Colonic mucosa (tissue), 4 donors: ENCODE measurements at regions of chr1 and their contacts with region 1.

Region 1: GRCh38 chr1:150813058-150813707 is 5.1 kb upstream of the CTSK start:
- DNase-seq: peak; percentile 84
- H3K4me3 ChIP-seq: no peak overlapping the region
- H3K27ac ChIP-seq: no peak overlapping the region
- H3K4me1 ChIP-seq: no peaks in the 10 kb centered on the region
- H3K27me3 ChIP-seq: no peaks in the 10 kb centered on the region
- CTCF ChIP-seq: peak; percentile 72

Region 2: DNA sequence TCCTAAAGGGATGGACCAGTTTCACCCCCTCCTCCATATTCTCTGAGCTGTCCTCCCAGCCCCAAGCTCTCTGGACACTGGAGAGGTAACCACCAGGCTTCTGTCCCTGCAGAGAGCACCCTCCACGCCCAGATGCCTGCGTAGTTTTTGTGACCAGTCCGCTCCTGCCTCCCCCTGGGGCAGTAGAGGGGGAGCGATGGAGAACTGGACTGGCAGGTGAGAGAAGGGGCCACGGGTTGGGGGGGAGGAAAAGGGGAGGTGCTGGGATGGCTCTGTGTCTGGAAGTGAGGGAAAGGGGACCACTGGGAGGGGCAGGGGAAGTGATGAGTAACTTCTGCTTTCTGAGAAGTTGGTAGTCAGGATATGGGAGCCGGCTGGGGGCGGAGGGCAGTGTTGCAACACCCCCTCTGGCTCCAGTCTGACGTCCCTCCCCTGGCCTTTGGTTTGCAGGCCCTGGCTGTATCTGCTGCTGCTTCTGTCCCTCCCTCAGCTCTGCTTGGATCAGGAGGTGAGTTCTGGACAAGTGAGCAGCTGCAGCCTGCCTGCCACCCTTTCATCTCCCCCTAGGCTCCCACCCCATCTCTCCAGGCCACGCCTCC is 261.0 kb before region 1 on chr1:
- intact Hi-C with region 1: loop called (anchors 10 kb)
- DNase-seq: peak; percentile 70
- H3K4me3 ChIP-seq: no peak overlapping the region
- H3K27ac ChIP-seq: peak overlapping the region; percentile 73
- H3K4me1 ChIP-seq: no peaks in the 10 kb centered on the region
- H3K27me3 ChIP-seq: no peaks in the 10 kb centered on the region
- CTCF ChIP-seq: no peak

Region 3: GRCh38 chr1:150748878-150749719 is 64.1 kb before region 1 on chr1:
- intact Hi-C with region 1: no loop called
- DNase-seq: peak; percentile 27
- H3K4me3 ChIP-seq: no peak overlapping the region
- H3K27ac ChIP-seq: peak overlapping the region; percentile 78
- H3K4me1 ChIP-seq: no peaks in the 10 kb centered on the region
- H3K27me3 ChIP-seq: no peaks in the 10 kb centered on the region
- CTCF ChIP-seq: no peak